ENCODE measurements at regions of chr18 and their contacts with region 1.

Region 1: DNA sequence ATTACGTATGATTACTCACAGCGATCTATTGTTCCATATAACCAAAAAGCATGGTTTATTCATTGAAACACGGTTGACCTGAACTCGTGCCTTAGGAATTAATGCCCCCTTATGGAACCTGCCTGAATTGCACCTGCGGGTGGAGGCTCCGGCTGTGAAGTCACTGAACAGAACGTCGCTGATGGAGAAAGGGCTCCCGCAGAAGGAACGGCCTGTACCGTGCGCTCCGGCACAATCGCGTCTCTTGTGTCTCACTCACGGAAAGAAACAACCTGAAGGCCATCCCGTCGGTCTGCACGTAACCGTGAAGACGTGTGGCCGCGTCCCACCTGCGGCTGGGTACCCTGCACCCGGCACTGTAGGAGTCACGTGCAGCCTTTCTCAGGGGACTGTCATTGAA is 133.1 kb downstream of the NFATC1 start:
- DNase-seq: no peak
- ATAC-seq: peak; percentile 30

Region 2: DNA sequence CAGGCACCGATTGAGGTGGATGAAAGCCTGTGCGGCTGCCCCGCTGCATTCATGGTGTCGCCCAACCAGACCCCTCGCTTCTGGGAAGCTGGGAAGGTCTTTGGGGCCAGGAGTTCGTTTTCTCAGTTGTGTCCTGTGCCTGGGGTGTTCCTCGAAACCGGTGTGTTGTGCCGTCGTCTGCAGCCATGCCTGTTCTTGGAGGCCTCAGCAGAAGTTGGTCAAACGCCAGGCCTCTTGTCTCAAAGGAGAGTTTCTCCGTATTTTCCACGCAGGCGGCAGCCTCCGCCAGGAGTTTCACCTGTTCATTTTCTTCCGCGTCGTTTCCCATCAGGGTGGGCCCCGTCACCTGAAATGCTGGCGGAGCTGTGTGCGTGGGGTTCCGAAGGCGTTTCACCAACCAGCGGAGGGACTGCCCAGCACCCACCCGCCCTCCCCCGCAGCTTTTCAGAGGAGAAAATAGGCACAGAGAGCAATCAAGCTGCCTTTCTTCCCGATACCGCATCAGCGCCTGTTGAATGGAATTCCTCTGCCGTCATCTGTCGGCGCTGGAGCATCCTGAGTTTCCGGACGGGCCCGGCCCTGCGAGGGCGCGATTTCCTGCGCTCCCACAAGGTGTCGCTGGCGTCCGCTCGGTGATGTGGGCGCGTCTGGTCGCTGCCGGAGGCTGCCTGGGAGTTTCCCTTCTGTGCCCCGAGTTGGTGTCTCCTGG is 150.2 kb before region 1 on chr18:
- intact Hi-C with region 1: loop called (anchors 1 kb)
- DNase-seq: peak; percentile 89
- ATAC-seq: peak; percentile 86

Region 3: GRCh38 chr18:79393635-79394533 is 135.0 kb before region 1 on chr18:
- intact Hi-C with region 1: loop called (anchors 5 kb)
- DNase-seq: peak; percentile 97
- ATAC-seq: peak; percentile 81

Region 4: DNA sequence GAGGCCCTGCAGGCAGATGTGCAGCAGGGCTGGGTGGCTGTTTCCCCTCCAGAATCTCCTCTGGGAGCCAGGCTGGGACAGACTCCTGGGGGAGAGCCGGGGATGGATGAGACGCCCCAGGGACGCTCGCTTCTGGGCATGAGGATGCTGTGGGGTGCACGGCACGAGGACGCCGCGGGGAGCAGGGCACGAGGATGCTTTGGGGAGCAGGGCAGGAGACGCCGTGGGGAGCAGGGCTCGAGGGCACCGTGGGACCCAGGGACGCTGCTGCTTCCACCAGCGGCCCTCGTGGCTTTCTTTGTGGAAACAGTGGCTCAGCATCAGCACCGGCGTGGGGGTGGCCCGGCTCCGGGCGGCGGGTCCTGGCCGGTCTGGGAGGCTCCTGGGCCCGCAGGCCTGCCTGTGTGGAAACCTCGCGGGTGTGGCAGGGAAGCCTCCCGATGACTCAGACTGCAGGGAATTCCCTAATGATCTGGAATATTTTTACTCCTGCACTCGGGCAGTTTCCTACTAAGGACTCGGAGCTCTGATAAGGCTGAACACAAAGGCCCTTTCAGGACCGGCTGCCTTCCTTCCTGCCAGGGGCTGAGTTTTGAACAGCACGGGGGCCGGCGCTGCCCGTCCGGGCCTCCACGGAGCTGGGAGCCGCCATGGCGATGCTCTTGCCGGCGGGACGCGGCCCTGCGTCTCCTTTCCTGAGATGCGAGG is 70.6 kb before region 1 on chr18:
- intact Hi-C with region 1: loop called (anchors 5 kb)
- DNase-seq: no peak
- ATAC-seq: peak; percentile 90

Region 5: DNA sequence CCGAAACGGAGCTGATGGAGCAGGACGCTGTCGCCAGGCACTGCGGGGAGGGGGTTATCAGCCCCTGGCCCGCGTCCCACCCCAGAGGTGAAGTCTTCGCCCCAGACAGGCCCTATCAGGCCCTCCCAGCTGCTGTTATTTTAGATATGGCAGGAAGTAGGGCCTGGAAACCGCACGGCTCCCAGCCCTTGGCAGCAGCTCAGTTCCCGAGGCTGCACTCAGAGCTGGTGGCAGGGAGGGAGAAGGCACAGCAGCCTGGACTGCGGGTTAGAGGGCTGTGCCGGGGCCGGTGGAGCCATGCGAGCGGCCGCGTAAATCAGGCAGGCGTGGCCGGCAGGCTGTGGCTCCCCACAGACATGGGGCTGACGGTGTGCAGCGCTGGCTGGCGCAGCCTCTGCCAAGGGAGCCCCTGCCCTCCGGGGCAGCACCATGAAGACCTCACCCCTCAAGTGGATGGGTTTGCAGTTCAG is 21.7 kb before region 1 on chr18:
- intact Hi-C with region 1: loop called (anchors 2 kb)
- DNase-seq: peak; percentile 86
- ATAC-seq: peak; percentile 92

Region 6: DNA sequence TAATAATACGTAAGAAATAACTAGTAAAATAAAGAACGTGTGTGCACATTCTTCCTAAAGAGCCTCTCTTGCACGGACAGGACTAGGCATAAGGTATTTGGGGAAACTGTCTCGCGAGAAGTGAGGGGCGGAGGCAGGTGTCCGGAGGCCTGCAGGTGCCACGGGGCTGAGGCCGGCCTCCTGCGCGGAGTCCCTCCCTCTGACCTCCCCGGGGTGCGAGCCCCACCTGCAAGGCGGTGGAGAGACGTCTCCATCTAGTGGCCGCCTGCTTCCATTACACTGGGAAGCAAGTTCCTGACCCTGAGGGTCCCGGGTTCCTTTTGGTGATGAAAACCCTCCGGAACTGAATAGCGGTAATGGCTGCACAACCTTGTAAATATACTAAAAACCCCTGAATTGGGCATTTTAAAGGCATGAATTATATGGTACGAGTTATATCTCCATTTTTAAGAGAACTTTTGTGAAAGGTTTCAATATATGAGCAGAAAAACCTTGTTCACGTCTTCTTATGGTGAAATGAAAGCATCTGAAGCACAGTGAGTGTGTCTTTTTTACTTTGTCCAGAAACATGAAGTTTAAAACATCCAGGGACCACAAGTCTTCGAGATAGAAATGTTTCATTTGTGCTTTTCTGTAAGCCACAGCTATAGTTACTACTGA is 115.3 kb after region 1 on chr18:
- intact Hi-C with region 1: loop called (anchors 1 kb)
- DNase-seq: no peak
- ATAC-seq: peak; percentile 85

Measured in Right ventricle myocardium inferior (tissue), 1 donor.